ENCODE measurements at regions of chr9 and their contacts with region 1.

Region 1: DNA sequence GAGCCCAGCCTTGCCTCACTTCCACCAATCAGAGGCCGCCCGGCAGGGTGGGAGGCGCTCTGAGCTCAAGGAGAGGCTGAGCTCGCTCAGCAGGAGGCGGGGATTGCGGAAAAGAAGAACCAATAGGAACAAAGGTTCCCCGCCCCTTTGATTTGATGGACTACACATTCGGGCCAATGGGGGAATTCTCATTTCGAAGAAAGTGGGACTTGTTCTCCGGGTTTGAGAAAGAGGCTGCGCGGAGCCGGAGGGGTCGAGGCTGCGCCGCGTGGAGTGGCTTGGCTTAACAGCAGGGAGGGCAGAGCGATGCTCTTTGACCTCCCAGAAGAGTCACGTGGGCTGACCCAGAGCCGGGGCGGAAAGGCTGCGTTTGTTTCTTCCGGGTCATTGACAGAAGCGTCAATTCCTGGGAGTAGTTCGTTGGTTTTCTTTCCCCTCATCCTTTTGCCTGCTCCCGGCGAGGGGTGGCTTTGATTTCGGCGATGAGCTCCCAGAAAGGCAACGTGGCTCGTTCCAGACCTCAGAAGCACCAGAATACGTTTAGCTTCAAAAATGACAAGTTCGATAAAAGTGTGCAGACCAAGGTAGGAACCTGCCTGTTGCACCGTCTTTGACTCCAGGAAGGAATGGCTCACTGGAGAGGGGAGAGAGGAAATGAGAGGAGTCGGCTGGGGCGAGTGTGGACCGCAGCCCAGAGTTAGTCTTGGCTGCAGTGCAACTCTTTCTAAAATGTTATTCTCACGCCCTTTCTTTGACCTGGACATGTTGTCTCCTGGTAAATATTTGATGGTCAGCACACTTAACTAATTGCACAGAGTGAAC is at the start of gene C9orf85:
- DNase-seq: peak; percentile 98
- H3K4me3 Mint-ChIP-seq: peak within 1 kb of the TSS; percentile 97
- H3K27ac Mint-ChIP-seq: peak within 1 kb of the TSS; percentile 92
- H3K4me1 Mint-ChIP-seq: peaks cover 52% of the 10 kb centered on the region
- H3K27me3 Mint-ChIP-seq: no peaks in the 10 kb centered on the region
- total RNA-seq, gene C9orf85: 7.3 to 7.5 TPM

Region 2: GRCh38 chr9:71683598-71684235 is 227.7 kb before region 1 on chr9:
- CTCF ChIA-PET with region 1: no interaction called
- POLR2A ChIA-PET with region 1: no interaction called
- intact Hi-C with region 1: loop called (anchors 10 kb)
- DNase-seq: no peak
- H3K4me3 Mint-ChIP-seq: no peak overlapping the region
- H3K27ac Mint-ChIP-seq: no peak overlapping the region
- H3K4me1 Mint-ChIP-seq: peaks cover 38% of the 10 kb centered on the region
- H3K27me3 Mint-ChIP-seq: no peaks in the 10 kb centered on the region

Region 3: GRCh38 chr9:71819115-71819739 is 92.2 kb before region 1 on chr9:
- CTCF ChIA-PET with region 1: interaction called, 11 read pairs
- POLR2A ChIA-PET with region 1: no interaction called
- intact Hi-C with region 1: no loop called
- DNase-seq: peak; percentile 23
- H3K4me3 Mint-ChIP-seq: no peak overlapping the region
- H3K27ac Mint-ChIP-seq: no peak overlapping the region
- H3K4me1 Mint-ChIP-seq: peaks cover 12% of the 10 kb centered on the region
- H3K27me3 Mint-ChIP-seq: no peaks in the 10 kb centered on the region

Region 4: DNA sequence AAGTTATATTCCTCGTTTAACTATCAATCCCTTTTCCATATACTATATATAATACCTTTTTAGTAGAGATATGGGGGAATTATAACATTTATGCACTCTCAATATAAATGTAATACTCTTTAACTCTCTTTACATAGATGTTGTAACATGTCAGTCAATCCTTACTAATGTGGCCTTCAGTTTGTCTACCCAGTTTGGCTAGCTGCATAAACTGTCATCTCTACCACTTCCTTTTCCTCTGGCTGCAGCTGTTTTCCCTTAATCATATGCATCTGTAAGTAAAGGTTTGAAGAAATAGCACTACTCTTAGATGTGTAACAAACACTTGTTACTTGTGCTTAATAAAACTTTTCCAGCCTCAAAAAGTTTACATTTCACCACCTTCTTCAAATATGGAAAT is 13.9 kb before region 1 on chr9:
- CTCF ChIA-PET with region 1: interaction called, 6 read pairs
- POLR2A ChIA-PET with region 1: interaction called, 6 read pairs
- intact Hi-C with region 1: loop called (anchors 1 kb)
- DNase-seq: no peak
- H3K4me3 Mint-ChIP-seq: no peak overlapping the region
- H3K27ac Mint-ChIP-seq: no peak overlapping the region
- H3K4me1 Mint-ChIP-seq: peaks cover 61% of the 10 kb centered on the region
- H3K27me3 Mint-ChIP-seq: no peaks in the 10 kb centered on the region

Region 5: DNA sequence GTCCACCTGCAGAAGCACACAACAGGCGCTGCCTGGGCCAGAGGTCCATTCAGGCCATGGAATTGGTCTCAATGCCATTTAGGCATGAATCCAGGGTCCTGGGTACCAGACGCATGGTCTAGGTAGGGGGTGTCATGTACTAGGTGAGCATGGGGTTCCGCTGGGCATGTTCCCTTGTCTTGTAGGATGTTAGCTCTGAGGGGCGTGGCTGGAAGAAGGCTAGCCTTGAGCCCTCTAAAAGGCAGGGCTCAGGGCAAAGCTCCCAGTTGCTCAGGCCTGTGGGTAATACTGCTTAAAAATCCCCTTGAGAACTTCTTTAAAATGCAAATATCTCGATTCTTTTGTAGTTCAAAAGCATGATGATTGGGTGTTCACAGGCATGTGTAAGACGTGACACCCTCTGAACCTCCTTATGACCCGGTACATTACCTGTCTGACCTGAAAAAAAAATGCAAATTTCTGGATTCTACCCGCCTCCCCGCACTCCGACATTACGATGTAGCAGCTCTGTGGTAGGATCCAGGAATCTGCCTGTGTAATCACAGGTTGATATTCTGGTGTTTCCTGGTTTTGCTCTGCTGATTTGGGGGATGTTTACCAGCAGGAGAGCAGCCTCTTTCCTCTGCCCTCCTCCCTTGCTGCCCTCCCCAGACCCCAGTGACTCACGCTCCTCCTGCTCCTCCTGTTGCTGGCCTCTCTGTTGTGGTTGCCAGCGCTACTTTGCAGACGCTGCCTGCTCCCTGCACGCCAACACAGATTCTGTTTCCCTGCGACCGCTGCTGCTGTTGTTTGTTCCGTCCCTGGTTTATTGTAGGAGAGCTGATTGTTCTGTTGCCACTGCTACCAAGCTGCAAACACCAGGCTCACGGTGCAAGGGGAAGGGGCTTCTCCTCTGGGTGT is 615.7 kb after region 1 on chr9:
- CTCF ChIA-PET with region 1: no interaction called
- POLR2A ChIA-PET with region 1: no interaction called
- intact Hi-C with region 1: loop called (anchors 10 kb)
- DNase-seq: peak; percentile 91
- H3K4me3 Mint-ChIP-seq: peak overlapping the region; percentile 73
- H3K27ac Mint-ChIP-seq: peak overlapping the region; percentile 93
- H3K4me1 Mint-ChIP-seq: peaks cover 42% of the 10 kb centered on the region
- H3K27me3 Mint-ChIP-seq: no peaks in the 10 kb centered on the region

Measured in activated CD4-positive, alpha-beta memory T cell treated with anti-CD3 and anti-CD28 coated beads for 36 hours (primary cell).